ENCODE measurements at regions of chr15 and their contacts with region 1.

Region 1: DNA sequence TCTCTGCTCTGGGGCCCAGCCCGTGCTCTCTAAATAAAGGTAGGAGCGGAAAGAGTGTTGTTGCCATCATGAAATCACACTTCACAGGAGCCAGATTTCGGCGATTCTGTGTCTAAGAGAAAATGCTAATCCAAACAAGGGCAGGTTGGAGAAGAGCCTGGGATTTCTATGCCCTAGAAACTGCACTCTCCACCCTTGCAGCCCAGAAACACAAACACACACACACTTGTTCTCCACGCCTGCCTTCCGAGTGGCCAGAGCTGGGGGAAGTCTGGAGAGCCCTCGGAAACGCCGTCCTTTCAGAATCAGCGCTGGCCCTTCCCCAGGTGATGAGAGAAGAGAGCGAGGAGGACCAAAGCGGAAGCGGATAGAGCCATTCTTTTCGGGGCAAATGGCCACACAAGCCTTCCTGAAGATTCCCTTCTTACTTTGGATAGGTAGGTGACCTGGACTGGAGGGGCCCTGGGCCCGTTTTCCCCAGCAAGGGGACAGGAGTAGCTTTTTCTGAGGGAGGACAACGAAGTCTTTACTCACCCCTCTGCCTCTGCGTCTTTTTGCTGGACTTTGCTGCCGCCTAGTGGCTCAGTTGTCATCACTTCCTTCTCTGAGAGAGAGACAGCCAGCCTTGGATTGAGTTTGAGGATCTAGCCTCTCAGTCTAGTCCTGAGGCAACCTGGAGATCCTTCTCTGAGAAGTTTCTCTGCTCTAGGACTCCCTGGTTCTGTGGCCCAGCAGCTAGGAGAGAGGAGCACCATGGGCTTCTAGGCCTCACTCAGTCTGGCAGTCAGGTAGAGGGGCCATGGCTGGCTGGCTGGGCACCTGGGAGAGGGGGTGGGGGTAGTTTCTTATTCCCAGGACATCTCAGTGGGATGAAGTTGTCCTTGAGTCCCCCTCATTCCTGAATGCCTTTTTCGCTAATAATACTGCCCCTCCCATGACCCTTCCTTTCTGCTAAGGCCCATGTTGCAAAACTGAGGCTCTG is 37.7 kb downstream of the SENP8 start:
- DNase-seq: peak; percentile 91 to 95
- ATAC-seq: peak; percentile 92
- H3K4me3 ChIP-seq: peak overlapping the region; percentile 47 to 54
- H3K27ac ChIP-seq: peak overlapping the region in 1 of 2 donors; percentile 88
- H3K4me1 ChIP-seq: no peaks in the 10 kb centered on the region
- H3K27me3 ChIP-seq: no peaks in the 10 kb centered on the region

Region 2: DNA sequence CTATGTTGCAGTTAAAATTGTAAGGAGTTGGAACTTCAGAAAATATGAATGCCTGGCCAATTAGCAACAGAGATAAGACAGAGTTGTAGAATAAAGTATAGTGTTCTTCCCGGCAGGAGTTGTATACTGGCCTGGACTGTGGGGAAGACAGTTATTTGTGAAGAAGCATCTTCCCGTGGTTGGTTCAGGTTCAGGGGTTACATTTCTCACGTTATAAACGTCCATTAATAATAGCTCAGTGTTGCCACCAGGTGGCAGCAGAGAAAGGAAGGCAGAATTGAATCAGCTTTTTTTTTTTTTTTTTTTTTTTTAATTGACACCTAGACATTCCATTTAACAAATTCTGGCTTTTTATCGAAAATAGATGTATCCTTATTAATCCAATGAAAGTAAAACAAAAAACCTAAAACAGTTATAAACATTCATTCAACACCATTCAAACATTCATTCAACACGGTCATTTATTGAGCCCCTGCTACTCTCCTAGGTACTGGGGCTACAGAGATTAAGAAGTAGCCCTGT is 412.0 kb before region 1 on chr15:
- intact Hi-C with region 1: loop called (anchors 2 to 5 kb)
- DNase-seq: peak in 1 of 2 donors; percentile 62
- ATAC-seq: no peak
- H3K4me3 ChIP-seq: no peak overlapping the region
- H3K27ac ChIP-seq: peak overlapping the region in 1 of 2 donors; percentile 34
- H3K4me1 ChIP-seq: no peaks in the 10 kb centered on the region
- H3K27me3 ChIP-seq: no peaks in the 10 kb centered on the region

Region 3: DNA sequence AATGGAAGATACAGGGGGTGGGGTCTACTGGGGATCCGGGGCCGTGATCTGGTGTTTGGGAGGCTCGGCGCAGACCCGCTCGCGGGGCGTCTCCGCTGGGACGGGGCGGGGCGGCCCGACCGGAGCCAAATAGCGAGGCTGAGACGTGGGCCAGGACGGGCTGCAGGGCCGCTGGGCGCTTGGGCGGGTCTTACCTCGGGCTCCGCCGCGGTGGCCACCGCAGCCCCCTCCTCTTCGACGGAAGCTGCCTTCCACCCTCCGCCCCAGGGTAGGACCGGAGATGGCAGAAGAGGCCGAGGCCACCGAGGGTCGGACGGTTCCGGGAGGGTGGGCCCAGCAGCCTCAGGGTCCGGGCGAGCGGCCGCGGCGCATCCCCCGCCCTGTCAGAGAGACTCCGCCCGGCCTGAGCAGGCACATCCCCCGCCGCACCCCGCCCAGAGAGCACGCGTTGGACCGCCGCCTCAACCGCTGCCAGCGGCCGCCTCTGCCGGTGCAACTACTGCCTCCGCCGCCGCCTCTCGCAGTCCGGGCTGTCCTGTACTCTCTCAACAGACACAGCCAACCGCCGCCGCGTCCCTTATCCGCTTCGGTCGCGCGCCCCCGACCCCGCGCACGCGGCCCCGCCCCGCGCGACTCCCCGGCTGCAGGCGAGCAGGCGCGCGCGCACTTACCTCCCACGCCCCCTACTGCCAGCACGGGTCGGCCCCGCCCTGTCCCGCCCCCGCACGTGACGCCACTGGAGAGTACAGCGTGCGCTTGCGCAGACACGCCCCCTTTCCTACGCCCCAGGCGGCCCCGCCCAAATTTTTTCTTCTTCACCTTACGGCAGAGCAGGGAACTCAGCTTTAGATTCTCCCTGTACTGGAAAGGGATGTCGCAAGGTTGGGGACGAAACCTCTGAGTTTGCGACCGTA is 38.2 kb before region 1 on chr15 and contains the start of gene MYO9A:
- intact Hi-C with region 1: loop called in 1 of 2 experiments (anchors 2 kb)
- DNase-seq: peak; percentile 98 to 100
- ATAC-seq: peak; percentile 96
- H3K4me3 ChIP-seq: peak within 1 kb of the TSS; percentile 62 to 72
- H3K27ac ChIP-seq: peak within 1 kb of the TSS; percentile 45 to 89
- H3K4me1 ChIP-seq: peaks cover 1 to 7% of the 10 kb centered on the region in 2 donors
- H3K27me3 ChIP-seq: no peaks in the 10 kb centered on the region
- total RNA-seq, gene MYO9A: 79.3 to 93.7 TPM

Region 4: GRCh38 chr15:72365844-72366243 is 209.9 kb after region 1 on chr15:
- intact Hi-C with region 1: no loop called
- DNase-seq: no peak
- ATAC-seq: no peak
- H3K4me3 ChIP-seq: no peak overlapping the region
- H3K27ac ChIP-seq: no peak overlapping the region
- H3K4me1 ChIP-seq: no peaks in the 10 kb centered on the region
- H3K27me3 ChIP-seq: no peaks in the 10 kb centered on the region

Measured in aorta (tissue), 5 donors.